PC-3 (cell line): ENCODE measurements at regions of chr1 and their contacts with region 1.

Region 1: DNA sequence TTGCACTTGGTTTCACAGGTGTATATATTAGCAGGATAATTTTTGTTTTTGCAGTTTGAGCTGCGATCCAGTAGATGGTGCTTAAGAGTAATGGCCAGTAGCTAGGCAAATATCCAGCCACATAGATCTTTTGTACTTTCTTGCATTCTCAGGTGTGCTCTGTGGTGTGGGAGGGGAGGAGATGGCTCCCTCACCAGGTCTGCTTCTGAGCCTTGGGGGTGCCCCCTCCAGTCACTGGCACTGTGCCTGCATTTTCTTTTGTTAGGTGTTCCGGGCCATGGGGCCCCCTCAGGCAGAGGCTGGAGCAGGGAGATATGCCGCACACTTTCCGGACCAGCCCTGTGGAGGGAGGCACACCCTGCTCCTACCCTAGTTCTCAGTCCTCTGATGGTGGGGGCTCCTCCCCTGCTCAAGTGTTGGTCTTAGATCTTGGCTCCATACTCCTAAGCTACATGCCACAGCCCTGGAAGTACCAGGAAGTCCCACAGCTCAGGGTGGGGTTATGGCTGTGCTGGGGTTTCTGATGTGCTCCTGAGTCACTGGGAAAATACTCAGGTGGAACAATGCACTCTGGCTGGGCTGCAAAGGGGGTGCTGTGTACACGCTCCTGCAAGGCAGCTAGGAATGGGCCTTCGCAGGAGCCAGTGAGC is 197.6 kb upstream of the DMRTA2 start:
- DNase-seq: peak; percentile 95
- ATAC-seq: peak; percentile 97
- H3K4me3 ChIP-seq: peak overlapping the region; percentile 61
- H3K27ac ChIP-seq: peak overlapping the region; percentile 98
- H3K4me1 ChIP-seq: peaks cover 15% of the 10 kb centered on the region
- H3K27me3 ChIP-seq: no peaks in the 10 kb centered on the region
- CTCF ChIP-seq: peak; percentile 75

Region 2: GRCh38 chr1:50591598-50591997 is 29.2 kb before region 1 on chr1:
- CTCF ChIA-PET with region 1: no interaction called
- POLR2A ChIA-PET with region 1: no interaction called
- intact Hi-C with region 1: no loop called
- DNase-seq: no peak
- ATAC-seq: no peak; the same call in 1 of the 2 replicates
- H3K4me3 ChIP-seq: no peak overlapping the region
- H3K27ac ChIP-seq: no peak overlapping the region
- H3K4me1 ChIP-seq: no peaks in the 10 kb centered on the region
- H3K27me3 ChIP-seq: no peaks in the 10 kb centered on the region
- CTCF ChIP-seq: no peak

Region 3: DNA sequence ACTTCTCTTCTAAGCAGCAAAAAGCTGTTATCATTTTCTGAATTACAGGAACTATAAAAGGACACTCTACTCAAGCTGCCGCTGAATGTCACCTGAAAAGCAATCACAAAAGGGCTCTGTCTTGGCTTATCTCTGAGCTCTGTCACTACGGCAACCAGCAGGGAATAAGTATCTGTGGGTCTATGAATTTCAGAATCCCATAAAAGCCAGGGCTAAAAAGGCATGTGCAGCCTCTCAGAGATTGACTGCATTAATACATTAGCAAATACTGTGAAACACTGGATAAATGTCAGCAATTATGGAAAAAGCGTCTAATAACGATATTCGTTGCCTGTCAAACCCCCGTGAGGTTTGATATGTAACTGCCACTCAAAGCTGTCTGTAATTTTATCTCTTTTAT is 12.7 kb after region 1 on chr1:
- CTCF ChIA-PET with region 1: no interaction called
- POLR2A ChIA-PET with region 1: interaction called, 29 read pairs
- intact Hi-C with region 1: no loop called
- DNase-seq: no peak
- ATAC-seq: no peak
- H3K4me3 ChIP-seq: no peak overlapping the region
- H3K27ac ChIP-seq: no peak overlapping the region
- H3K4me1 ChIP-seq: no peaks in the 10 kb centered on the region
- H3K27me3 ChIP-seq: no peaks in the 10 kb centered on the region
- CTCF ChIP-seq: no peak

Region 4: GRCh38 chr1:50651476-50652263 is 30.9 kb after region 1 on chr1:
- CTCF ChIA-PET with region 1: interaction called, 10 read pairs
- POLR2A ChIA-PET with region 1: no interaction called
- intact Hi-C with region 1: no loop called
- DNase-seq: no peak
- ATAC-seq: peak; percentile 68
- H3K4me3 ChIP-seq: no peak overlapping the region
- H3K27ac ChIP-seq: no peak overlapping the region
- H3K4me1 ChIP-seq: no peaks in the 10 kb centered on the region
- H3K27me3 ChIP-seq: no peaks in the 10 kb centered on the region
- CTCF ChIP-seq: no peak

Region 5: DNA sequence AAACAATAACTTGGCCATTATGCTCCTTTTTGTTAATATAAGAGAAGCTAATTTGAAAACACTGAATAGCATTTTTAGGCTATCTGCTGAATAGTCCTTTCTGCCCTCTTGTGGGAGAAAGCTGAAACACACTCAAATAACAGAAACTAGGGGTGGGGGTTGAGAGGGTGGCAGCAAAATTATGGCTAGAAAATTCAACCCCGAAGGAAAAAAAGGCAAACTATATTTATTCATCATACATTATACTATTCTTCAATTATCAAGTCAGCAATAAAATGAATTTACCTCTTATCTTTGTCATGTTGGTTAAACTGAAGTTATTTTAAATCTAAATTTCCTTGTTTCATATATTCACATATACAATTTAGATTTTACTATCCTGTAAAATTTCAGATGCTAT is 83.3 kb after region 1 on chr1:
- CTCF ChIA-PET with region 1: interaction called, 41 read pairs
- POLR2A ChIA-PET with region 1: interaction called, 3 read pairs
- intact Hi-C with region 1: loop called (anchors 1 kb)
- DNase-seq: peak; percentile 73
- ATAC-seq: peak; percentile 45
- H3K4me3 ChIP-seq: no peak overlapping the region
- H3K27ac ChIP-seq: no peak overlapping the region
- H3K4me1 ChIP-seq: no peaks in the 10 kb centered on the region
- H3K27me3 ChIP-seq: no peaks in the 10 kb centered on the region
- CTCF ChIP-seq: peak; percentile 88

Region 6: DNA sequence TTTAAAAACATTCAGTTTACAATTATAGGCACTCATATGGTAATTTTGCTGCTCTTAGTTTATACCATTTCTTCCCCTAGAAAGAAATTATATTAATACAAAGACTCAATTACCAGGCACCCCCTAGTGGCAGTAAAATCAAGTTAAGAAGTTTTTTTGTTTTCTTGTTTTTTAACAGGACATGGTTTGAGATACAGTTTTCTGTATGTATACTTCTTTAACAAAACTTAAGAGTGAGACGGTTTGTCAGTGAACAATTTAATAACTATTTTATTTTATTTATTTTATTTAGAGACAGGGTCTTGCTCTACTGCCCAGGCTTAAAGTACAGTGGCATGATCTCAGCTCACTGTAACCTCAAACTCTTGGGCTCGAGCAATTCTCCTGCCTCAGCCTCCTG is 114.6 kb after region 1 on chr1:
- CTCF ChIA-PET with region 1: interaction called, 3 read pairs
- POLR2A ChIA-PET with region 1: no interaction called
- intact Hi-C with region 1: loop called (anchors 1 kb)
- DNase-seq: peak; percentile 50
- ATAC-seq: no peak
- H3K4me3 ChIP-seq: no peak overlapping the region
- H3K27ac ChIP-seq: no peak overlapping the region
- H3K4me1 ChIP-seq: no peaks in the 10 kb centered on the region
- H3K27me3 ChIP-seq: no peaks in the 10 kb centered on the region
- CTCF ChIP-seq: peak; percentile 74